Activated naive CD4-positive, alpha-beta T cell treated with anti-CD3 and anti-CD28 coated beads for 36 hours (primary cell): ENCODE measurements at regions of chr6 and their contacts with region 1.

Region 1: DNA sequence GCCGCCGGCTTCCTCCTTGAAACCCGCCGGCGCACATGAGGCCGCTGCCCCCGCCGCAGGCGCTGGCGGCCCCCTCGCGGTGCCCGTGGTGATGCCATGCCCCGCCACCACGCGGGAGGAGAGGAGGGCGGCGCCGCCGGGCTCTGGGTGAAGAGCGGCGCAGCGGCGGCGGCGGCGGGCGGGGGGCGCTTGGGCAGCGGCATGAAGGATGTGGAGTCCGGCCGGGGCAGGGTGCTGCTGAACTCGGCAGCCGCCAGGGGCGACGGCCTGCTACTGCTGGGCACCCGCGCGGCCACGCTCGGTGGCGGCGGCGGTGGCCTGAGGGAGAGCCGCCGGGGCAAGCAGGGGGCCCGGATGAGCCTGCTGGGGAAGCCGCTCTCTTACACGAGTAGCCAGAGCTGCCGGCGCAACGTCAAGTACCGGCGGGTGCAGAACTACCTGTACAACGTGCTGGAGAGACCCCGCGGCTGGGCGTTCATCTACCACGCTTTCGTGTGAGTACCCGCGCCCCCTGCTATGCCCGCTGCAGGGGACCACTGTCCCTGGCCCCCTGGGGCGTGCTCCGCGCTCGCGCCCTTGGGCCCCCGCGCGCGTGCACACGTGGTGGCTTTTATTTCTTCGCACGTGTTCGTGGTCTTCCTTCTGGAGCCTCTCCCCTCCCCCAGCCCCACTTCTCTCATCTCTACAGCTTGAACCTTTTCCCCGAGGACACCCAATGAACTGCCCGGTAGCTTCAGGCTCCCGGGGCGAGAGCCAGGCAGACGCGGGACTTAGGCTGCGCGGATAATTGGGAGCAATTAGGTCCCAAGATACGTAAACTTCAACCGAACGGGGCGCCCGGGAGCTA is 453 bp downstream of the KCNQ5 start:
- DNase-seq: peak; percentile 57
- H3K4me3 Mint-ChIP-seq: peak overlapping the region; percentile 96
- H3K27ac Mint-ChIP-seq: peak overlapping the region; percentile 98
- H3K4me1 Mint-ChIP-seq: peaks cover 66% of the 10 kb centered on the region
- H3K27me3 Mint-ChIP-seq: no peaks in the 10 kb centered on the region

Region 2: GRCh38 chr6:72649032-72649984 is 27.0 kb after region 1 on chr6:
- CTCF ChIA-PET with region 1: interaction called, 4 read pairs
- intact Hi-C with region 1: loop called (anchors 1 kb)
- DNase-seq: peak; percentile 57
- H3K4me3 Mint-ChIP-seq: no peak overlapping the region
- H3K27ac Mint-ChIP-seq: peak overlapping the region; percentile 60
- H3K4me1 Mint-ChIP-seq: peaks cover 57% of the 10 kb centered on the region
- H3K27me3 Mint-ChIP-seq: no peaks in the 10 kb centered on the region

Region 3: DNA sequence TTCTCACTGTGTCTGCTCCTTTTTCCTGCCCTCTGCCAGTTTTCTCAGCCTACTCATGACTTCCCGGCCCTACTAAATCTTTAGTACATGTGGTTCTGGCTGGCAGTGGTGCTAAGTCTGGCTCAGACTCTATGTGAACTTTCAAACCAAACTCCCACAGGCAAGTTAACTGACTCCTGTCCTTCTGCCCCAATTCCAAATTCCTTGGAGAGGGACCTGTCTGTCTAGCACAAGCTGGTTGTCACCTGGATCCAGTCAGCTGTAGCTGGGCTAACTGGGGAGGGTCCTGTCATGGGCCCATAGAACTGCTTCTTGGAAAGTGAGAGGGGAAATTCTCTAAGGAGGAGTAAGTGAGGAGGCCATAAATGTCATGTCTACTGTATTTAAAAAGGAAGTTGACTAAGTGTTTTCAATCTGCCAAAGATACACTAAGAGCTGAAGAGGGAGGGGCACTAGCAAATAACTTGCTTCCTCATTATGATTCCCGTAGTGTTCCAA is 239.7 kb after region 1 on chr6:
- CTCF ChIA-PET with region 1: no interaction called
- intact Hi-C with region 1: no loop called
- DNase-seq: peak; percentile 5
- H3K4me3 Mint-ChIP-seq: no peak overlapping the region
- H3K27ac Mint-ChIP-seq: peak overlapping the region; percentile 33
- H3K4me1 Mint-ChIP-seq: peaks cover 7% of the 10 kb centered on the region
- H3K27me3 Mint-ChIP-seq: no peaks in the 10 kb centered on the region

Region 4: GRCh38 chr6:73032586-73032985 is 410.3 kb after region 1 on chr6:
- CTCF ChIA-PET with region 1: no interaction called
- intact Hi-C with region 1: loop called (anchors 5 kb)
- DNase-seq: no peak
- H3K4me3 Mint-ChIP-seq: no peak overlapping the region
- H3K27ac Mint-ChIP-seq: no peak overlapping the region
- H3K4me1 Mint-ChIP-seq: peaks cover 11% of the 10 kb centered on the region
- H3K27me3 Mint-ChIP-seq: no peaks in the 10 kb centered on the region

Region 5: DNA sequence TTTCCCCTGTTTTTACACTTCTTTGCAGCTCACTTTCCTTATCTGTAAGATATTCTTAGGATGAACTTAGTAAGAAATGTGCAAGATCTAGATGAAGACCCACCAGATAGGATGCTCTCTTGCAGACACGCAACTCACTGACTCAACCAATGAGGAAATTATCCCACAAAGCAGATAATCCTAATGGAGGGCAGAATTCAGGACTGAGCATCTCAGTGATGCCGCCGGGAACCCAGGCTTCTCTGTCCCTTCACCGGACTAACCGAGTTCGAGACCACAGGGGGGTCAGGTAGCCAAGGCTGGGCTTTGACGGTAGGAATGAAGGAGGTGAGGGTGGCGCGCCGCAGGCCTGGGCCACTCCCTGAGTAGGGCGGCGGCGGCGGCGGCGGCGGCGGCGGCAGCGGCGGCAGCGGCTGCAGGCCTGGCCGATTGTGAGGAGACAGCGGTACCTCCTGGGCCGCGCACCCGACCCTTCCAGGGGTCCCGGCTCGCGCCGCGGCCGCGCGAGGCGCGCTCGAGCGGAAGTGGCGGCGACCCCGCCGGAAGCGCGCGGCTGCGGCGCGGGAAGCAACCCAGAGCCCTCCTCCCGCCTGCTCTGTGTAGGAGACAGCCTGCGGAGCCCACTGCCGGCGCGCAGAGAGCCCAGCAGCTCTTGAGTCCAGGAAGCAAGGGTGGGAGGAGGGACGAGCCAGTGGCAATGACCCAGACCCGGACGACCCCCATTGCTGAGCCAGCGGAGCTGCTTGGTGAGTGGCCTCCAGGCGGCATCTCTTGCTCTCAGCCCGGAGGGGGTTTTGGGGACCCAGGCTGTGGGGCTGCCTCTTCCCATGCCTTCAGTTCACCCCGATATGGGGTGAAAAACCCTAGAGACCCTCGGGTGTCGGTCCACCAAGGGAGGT is 640.6 kb after region 1 on chr6 and contains the start of gene KHDC1:
- CTCF ChIA-PET with region 1: interaction called, 3 read pairs
- intact Hi-C with region 1: loop called (anchors 2 kb)
- DNase-seq: peak; percentile 65
- H3K4me3 Mint-ChIP-seq: peak within 1 kb of the TSS; percentile 80
- H3K27ac Mint-ChIP-seq: peak within 1 kb of the TSS; percentile 56
- H3K4me1 Mint-ChIP-seq: peaks cover 30% of the 10 kb centered on the region
- H3K27me3 Mint-ChIP-seq: no peaks in the 10 kb centered on the region
- total RNA-seq, gene KHDC1: 1.1 to 1.6 TPM

Region 6: GRCh38 chr6:73520688-73521350 is 898.5 kb after region 1 on chr6 and contains the start of gene EEF1A1:
- CTCF ChIA-PET with region 1: no interaction called
- intact Hi-C with region 1: loop called (anchors 1 kb)
- DNase-seq: peak; percentile 100
- H3K4me3 Mint-ChIP-seq: peak within 1 kb of the TSS; percentile 93
- H3K27ac Mint-ChIP-seq: peak within 1 kb of the TSS; percentile 99
- H3K4me1 Mint-ChIP-seq: peaks cover 33% of the 10 kb centered on the region
- H3K27me3 Mint-ChIP-seq: peaks cover 4% of the 10 kb centered on the region
- total RNA-seq, gene EEF1A1: 18,342 to 18,732 TPM

Region 7: GRCh38 chr6:73695619-73696421 is 1073.5 kb after region 1 on chr6 and contains the start of gene CD109:
- CTCF ChIA-PET with region 1: no interaction called
- intact Hi-C with region 1: loop called (anchors 1 kb)
- DNase-seq: peak; percentile 89
- H3K4me3 Mint-ChIP-seq: peak within 1 kb of the TSS; percentile 92
- H3K27ac Mint-ChIP-seq: peak within 1 kb of the TSS; percentile 96
- H3K4me1 Mint-ChIP-seq: peaks cover 44% of the 10 kb centered on the region
- H3K27me3 Mint-ChIP-seq: peaks cover 9% of the 10 kb centered on the region
- total RNA-seq, gene CD109: 6.7 to 7.6 TPM